ENCODE measurements at regions of chr7 and their contacts with region 1.

Region 1: DNA sequence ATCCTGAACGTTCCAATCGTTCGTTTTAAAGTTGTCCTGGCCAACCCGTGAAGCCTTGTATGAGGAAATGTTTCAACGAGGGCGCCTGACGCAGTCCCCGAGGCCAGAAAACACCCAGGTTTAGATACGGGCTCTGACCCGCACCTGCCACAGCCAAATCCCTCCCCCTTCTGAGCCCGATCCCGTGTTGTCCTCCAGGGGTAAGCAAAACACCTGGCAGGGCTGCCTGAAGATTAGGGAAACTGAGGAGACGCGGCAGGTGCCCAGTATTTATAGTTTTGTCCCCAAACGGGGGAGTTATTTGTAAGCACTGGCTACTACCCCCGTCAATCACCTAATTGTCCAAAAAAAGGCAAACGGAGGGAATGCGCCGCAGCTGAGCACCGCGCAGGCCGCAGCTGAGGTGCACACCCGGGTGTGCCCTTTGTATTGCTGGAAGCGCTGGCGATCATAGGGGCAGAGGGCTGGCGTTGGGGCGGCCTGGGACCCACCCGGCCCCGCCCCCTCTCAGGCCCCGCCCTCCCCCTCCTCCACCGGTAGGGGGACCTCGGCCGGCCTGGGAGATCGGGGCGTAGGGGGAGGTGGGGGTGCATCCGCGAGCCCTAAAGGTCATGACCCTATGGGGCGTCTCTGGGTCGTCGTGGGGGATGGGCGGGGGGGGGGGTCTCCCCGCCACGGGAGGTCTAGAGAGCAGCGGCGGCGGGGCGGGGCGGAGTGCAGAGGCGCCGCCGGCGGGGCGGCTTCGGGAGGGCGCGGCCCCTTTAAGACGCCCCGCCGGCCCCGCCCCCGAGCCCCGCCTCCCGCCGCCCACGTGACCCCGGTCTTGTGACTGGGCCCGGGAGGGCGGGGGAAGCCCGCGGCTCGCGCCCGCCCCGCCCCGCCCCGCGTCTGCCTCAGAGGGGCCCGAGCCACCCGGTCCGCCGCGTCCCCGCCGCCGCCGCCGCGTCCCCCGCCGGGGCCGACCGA is at the start of gene BRI3:
- DNase-seq: peak; percentile 73 to 93 (median 85)
- ATAC-seq: peak; percentile 87
- H3K4me3 ChIP-seq: peak within 1 kb of the TSS; percentile 96
- H3K4me3 Mint-ChIP-seq: peak within 1 kb of the TSS; percentile 85 to 91 (median 88)
- H3K27ac ChIP-seq: peak within 1 kb of the TSS; percentile 92
- H3K27ac Mint-ChIP-seq: peak within 1 kb of the TSS; percentile 83 to 94 (median 88)
- H3K4me1 ChIP-seq: peaks cover 10 to 30% of the 10 kb centered on the region in 2 donors
- H3K4me1 Mint-ChIP-seq: peaks cover 20 to 40% (median 30%) of the 10 kb centered on the region in 7 donors
- H3K27me3 ChIP-seq: no peaks in the 10 kb centered on the region
- H3K27me3 Mint-ChIP-seq: no peaks in the 10 kb centered on the region
- total RNA-seq, gene BRI3: 73.1 to 194 (median 86.5) TPM

Region 2: DNA sequence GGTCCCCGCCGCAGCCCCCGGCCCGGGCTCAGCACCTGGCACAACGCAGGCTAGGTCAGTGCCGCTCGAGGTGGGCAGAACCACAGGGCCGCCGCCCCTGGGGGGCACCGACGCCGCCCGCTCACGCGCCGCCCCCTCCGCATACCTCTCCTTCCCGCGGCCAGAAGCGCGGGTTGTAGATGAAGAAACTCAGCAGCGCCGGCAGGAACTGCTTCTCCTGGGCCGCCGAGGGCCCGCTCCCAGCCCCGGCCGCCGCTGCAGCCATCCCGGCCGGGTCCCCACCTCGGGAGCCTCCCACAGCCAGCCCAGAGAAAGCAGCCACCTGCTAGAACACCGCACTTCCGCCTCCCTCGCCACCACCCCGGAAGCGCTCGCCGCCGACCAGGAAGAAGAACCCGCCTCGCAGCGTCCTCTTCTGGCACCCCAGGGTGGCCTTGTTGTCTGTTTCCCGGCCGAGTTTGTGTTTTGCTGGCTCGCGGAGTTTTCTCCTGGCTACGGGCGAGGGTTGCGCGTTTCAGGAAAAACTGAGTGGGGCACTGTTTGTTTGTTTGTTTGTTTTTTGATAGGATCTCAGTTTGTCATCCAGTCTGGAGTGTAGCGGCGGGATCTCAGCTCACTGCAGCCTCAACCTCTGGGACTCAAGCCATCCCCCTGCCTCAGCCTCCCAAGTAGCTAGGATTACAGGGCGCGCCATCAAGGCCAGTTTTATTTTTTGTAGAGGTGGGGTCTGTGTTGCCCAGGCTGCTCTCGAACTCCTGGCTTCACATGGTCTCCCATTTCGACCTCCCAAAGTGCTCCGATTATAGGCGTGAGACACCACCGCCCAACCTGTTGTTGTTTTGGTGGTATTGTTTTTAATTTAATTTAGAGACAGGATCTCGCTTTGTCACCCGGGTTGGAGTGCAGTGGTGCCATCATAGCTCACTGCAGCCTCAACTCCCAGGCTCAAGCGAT is 308.8 kb before region 1 on chr7:
- CTCF ChIA-PET with region 1: no interaction called
- POLR2A ChIA-PET with region 1: no interaction called
- intact Hi-C with region 1: loop called in 1 of 2 experiments (anchors 1 kb)
- DNase-seq: peak; percentile 68 to 86 (median 83)
- ATAC-seq: peak; percentile 94
- H3K4me3 ChIP-seq: peak overlapping the region; percentile 87
- H3K4me3 Mint-ChIP-seq: peak overlapping the region; percentile 90 to 98 (median 96)
- H3K27ac ChIP-seq: peak overlapping the region; percentile 84
- H3K27ac Mint-ChIP-seq: peak overlapping the region; percentile 94 to 97 (median 96)
- H3K4me1 ChIP-seq: peaks cover 10% of the 10 kb centered on the region in 2 donors
- H3K4me1 Mint-ChIP-seq: peaks cover 5 to 37% (median 17%) of the 10 kb centered on the region in 7 donors
- H3K27me3 ChIP-seq: no peaks in the 10 kb centered on the region
- H3K27me3 Mint-ChIP-seq: peaks cover 0 to 3% (median 0%) of the 10 kb centered on the region in 5 donors

Region 3: DNA sequence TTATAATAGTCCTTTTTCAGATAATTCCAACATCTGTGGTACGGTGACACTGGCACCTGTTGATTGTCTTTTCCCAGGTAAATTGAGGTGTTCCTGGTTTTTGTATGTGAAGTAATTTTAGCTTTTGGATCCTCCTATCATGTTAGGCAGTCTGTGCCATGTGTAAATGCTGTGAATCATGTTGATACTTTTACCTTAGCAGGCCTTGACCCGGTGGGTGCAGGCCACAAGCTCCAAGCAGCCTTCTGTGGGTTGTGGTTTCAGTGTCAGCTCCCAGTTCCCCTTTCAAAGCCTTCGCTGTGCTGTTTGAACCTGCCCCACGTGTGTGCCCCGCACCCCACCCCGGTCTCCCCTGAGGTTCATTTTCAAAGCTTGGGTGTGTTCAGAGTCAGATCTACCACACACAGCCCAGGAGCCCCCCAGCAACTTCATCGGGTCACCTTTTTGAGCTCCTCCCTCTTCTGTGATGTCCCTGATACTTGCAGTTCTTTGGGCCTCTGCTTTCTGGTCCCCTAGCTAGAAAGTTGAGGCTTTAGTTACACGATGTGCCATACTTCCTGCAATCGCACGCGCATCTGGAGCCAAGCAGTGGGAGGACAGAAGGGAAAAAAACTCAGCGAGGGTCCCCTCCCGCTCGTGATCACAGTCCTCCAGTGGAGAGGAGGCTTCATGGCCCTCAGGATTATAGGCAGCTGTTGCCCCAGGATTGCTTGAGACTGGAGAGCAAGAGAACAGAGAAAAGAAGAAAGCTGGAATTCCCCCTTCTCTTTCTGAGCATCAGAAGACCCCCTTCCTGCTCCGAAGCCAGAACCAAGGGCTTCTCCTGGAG is 78.5 kb before region 1 on chr7:
- CTCF ChIA-PET with region 1: interaction called, 3 read pairs
- POLR2A ChIA-PET with region 1: interaction called, 4 read pairs
- intact Hi-C with region 1: loop called (anchors 1 to 5 kb)
- DNase-seq: peak in 8 of 9 donors; percentile 60 to 71 (median 64)
- ATAC-seq: peak; percentile 93
- H3K4me3 ChIP-seq: peak overlapping the region; percentile 24
- H3K4me3 Mint-ChIP-seq: peak overlapping the region; percentile 81 to 91 (median 86)
- H3K27ac ChIP-seq: peak overlapping the region; percentile 60
- H3K27ac Mint-ChIP-seq: peak overlapping the region; percentile 55 to 96 (median 80)
- H3K4me1 ChIP-seq: peaks cover 21 to 49% of the 10 kb centered on the region in 2 donors
- H3K4me1 Mint-ChIP-seq: peaks cover 35 to 76% (median 65%) of the 10 kb centered on the region in 7 donors
- H3K27me3 ChIP-seq: no peaks in the 10 kb centered on the region
- H3K27me3 Mint-ChIP-seq: no peaks in the 10 kb centered on the region

Region 4: GRCh38 chr7:98400542-98401340 is 119.7 kb after region 1 on chr7 and contains the start of gene BAIAP2L1:
- CTCF ChIA-PET with region 1: interaction called, 3 read pairs
- POLR2A ChIA-PET with region 1: no interaction called
- intact Hi-C with region 1: loop called (anchors 1 to 2 kb)
- DNase-seq: peak; percentile 54 to 82 (median 70)
- ATAC-seq: peak; percentile 96
- H3K4me3 ChIP-seq: peak within 1 kb of the TSS; percentile 41
- H3K4me3 Mint-ChIP-seq: peak within 1 kb of the TSS; percentile 66 to 84 (median 74)
- H3K27ac ChIP-seq: peak within 1 kb of the TSS; percentile 39
- H3K27ac Mint-ChIP-seq: peak within 1 kb of the TSS in 5 of 9 donors; percentile 25 to 75 (median 59)
- H3K4me1 ChIP-seq: peaks cover 0 to 5% of the 10 kb centered on the region in 2 donors
- H3K4me1 Mint-ChIP-seq: peaks cover 0 to 14% (median 6%) of the 10 kb centered on the region in 7 donors
- H3K27me3 ChIP-seq: no peaks in the 10 kb centered on the region
- H3K27me3 Mint-ChIP-seq: peaks cover 0 to 23% (median 9%) of the 10 kb centered on the region in 5 donors
- total RNA-seq, gene BAIAP2L1: 0.32 to 2.0 (median 0.56) TPM

Measured in naive thymus-derived CD4-positive, alpha-beta T cell (primary cell).